Aorta (tissue), 5 donors: ENCODE measurements at regions of chr14 and their contacts with region 1.

Region 1: GRCh38 chr14:61694830-61695694 is at the start of gene HIF1A:
- DNase-seq: peak; percentile 98 to 99
- ATAC-seq: peak; percentile 98
- H3K4me3 ChIP-seq: peak within 1 kb of the TSS; percentile 82 to 84
- H3K27ac ChIP-seq: peak within 1 kb of the TSS in 1 of 2 donors; percentile 95
- H3K4me1 ChIP-seq: peaks cover 0 to 8% of the 10 kb centered on the region in 2 donors
- H3K27me3 ChIP-seq: peaks cover 0 to 2% of the 10 kb centered on the region in 2 donors
- total RNA-seq, gene HIF1A: 164 to 173 TPM

Region 2: GRCh38 chr14:61568572-61569131 is 126.4 kb before region 1 on chr14:
- intact Hi-C with region 1: loop called in 1 of 2 experiments (anchors 10 kb)
- DNase-seq: no peak
- ATAC-seq: no peak
- H3K4me3 ChIP-seq: no peak overlapping the region
- H3K27ac ChIP-seq: no peak overlapping the region
- H3K4me1 ChIP-seq: peaks cover 0 to 2% of the 10 kb centered on the region in 2 donors
- H3K27me3 ChIP-seq: no peaks in the 10 kb centered on the region

Region 3: GRCh38 chr14:61653507-61653906 is 41.6 kb before region 1 on chr14:
- intact Hi-C with region 1: no loop called
- DNase-seq: peak in 1 of 2 donors; percentile 60
- ATAC-seq: no peak
- H3K4me3 ChIP-seq: no peak overlapping the region
- H3K27ac ChIP-seq: no peak overlapping the region
- H3K4me1 ChIP-seq: no peaks in the 10 kb centered on the region
- H3K27me3 ChIP-seq: no peaks in the 10 kb centered on the region

Region 4: GRCh38 chr14:61749867-61750266 is 54.8 kb after region 1 on chr14:
- intact Hi-C with region 1: loop called in 1 of 2 experiments (anchors 5 kb)
- DNase-seq: no peak
- ATAC-seq: no peak
- H3K4me3 ChIP-seq: peak overlapping the region in 1 of 2 donors; percentile 26
- H3K27ac ChIP-seq: no peak overlapping the region
- H3K4me1 ChIP-seq: peaks cover 0 to 1% of the 10 kb centered on the region in 2 donors
- H3K27me3 ChIP-seq: no peaks in the 10 kb centered on the region

Region 5: DNA sequence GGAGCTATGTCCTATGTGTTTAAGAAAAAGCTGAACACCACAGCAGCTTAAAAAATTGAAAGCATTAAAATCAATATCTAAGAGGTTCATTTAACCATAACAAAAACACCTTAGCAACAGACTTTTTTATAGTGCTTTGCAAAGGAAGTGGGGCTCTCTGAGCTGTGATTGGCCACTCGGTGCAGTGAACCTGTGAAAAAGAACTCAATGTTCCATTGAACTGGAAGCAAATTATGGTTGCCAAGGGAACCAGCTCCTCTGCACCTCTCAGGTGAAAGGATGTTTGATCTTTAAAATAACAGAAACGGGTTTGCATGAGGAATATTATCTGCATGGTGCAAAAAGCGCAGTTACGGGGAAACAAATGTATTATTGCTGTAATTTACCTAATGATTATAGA is 216.5 kb after region 1 on chr14:
- intact Hi-C with region 1: no loop called
- DNase-seq: no peak
- ATAC-seq: no peak
- H3K4me3 ChIP-seq: no peak overlapping the region
- H3K27ac ChIP-seq: no peak overlapping the region
- H3K4me1 ChIP-seq: no peaks in the 10 kb centered on the region
- H3K27me3 ChIP-seq: no peaks in the 10 kb centered on the region